K562 (cell line): ENCODE measurements at regions of chr2 and their contacts with region 1.

Region 1: DNA sequence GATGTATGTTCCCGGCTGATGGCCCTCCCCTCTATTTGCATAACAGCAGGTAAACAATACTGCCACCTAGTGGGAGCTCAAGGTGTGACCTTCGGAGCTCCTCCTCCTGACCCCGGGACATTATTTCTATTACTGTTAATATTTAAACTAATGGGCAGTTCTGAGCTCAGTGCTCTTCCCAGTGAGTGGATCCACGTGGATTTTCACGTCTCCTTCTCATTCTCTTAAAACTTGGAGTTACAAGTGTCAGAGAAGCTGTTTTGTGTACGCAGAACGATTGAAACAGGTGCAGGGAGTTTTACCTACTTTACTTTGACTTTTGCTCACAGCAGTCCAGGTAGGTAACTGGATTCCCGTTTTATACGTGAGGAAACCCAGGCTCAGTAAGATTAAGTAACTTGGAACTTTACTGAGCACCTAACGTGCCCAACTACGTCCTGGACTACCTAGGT is 127.3 kb downstream of the PRKCE start:
- DNase-seq: peak; percentile 77 to 87 (median 84)
- ATAC-seq: peak; percentile 98
- H3K4me3 ChIP-seq: no peak overlapping the region
- H3K27ac ChIP-seq: no peak overlapping the region
- H3K4me1 ChIP-seq: no peaks in the 10 kb centered on the region; a peak in 1 of 5 replicates
- H3K27me3 ChIP-seq: peaks cover 0 to 10% of the 10 kb centered on the region in 2 experiments; a peak in 3 of 5 replicates
- CTCF ChIP-seq: peak; percentile 75 to 88 (median 78)
- EP300 ChIP-seq: no peak
- POLR2A ChIP-seq: no peak
- RAD21 ChIP-seq: peak; percentile 68 to 74

Region 2: GRCh38 chr2:44981136-44982108 is 797.3 kb before region 1 on chr2:
- CTCF ChIA-PET with region 1: interaction called, 3 read pairs
- POLR2A ChIA-PET with region 1: no interaction called
- in situ Hi-C with region 1: no loop called
- intact Hi-C with region 1: loop called (anchors 5 kb)
- DNase-seq: peak; percentile 71 to 80 (median 74)
- ATAC-seq: peak; percentile 93
- H3K4me3 ChIP-seq: no peak overlapping the region
- H3K27ac ChIP-seq: no peak overlapping the region
- H3K4me1 ChIP-seq: no peaks in the 10 kb centered on the region
- H3K27me3 ChIP-seq: peaks cover 5% of the 10 kb centered on the region in 2 experiments; a peak in 3 of 5 replicates
- CTCF ChIP-seq: peak; percentile 75 to 86 (median 82)
- EP300 ChIP-seq: no peak
- POLR2A ChIP-seq: no peak
- RAD21 ChIP-seq: peak; percentile 84 to 92

Region 3: GRCh38 chr2:45649858-45650811 is 128.6 kb before region 1 on chr2:
- CTCF ChIA-PET with region 1: interaction called, 24 read pairs
- POLR2A ChIA-PET with region 1: interaction called, 5 read pairs
- in situ Hi-C with region 1: loop called (anchors 5 kb)
- intact Hi-C with region 1: no loop called
- DNase-seq: peak; percentile 46 to 59 (median 50)
- ATAC-seq: peak; percentile 63
- H3K4me3 ChIP-seq: peak overlapping the region; percentile 72
- H3K27ac ChIP-seq: peak overlapping the region; percentile 37; the same call in 1 of the 3 replicates
- H3K4me1 ChIP-seq: peaks cover 0 to 29% of the 10 kb centered on the region in 2 experiments; a peak in 4 of 5 replicates
- H3K27me3 ChIP-seq: peaks cover 31 to 55% of the 10 kb centered on the region in 2 experiments
- CTCF ChIP-seq: no peak
- EP300 ChIP-seq: no peak
- POLR2A ChIP-seq: no peak
- RAD21 ChIP-seq: no peak

Region 4: DNA sequence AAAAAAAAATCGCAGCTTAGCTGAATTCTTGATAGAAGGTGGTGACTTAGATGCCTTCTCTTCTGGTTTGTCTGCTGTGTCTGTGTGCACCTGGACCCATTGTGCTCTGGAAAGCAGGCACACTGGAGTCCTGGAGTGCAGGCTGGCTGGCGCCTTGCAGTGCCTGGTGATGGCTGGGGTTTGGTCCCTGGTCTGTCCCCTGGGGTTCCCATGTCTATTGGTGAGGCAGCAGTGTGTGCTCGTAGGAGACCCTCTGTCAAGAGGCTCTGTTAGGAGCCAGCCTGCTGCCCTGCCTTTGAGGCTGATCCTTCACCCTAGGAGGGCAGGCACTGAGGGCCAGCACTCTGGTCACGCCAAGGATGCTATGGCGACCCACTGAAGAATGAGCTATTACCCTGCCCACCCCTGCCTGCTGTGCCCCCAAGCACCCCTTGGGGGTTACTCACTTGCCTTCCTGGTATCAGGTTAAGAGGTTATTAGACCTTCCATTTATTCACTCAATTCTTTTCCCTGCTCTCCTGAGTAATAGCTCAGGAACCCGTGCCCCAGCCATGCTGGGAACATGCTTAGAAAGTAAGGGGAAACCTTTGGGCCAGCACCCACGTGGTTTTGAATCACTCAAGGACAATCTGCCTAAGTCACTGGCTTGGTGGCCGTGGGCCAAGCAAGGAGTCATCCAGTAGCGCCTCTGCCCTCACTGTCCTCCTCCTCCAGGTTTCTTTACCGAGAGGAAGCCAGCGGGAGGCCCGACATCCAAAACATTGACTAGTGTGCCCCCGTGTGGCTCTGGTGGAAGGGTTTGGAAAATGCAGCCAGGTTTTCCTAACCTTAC is 157.3 kb after region 1 on chr2:
- CTCF ChIA-PET with region 1: interaction called, 6 read pairs
- POLR2A ChIA-PET with region 1: no interaction called
- in situ Hi-C with region 1: no loop called
- intact Hi-C with region 1: loop called (anchors 2 kb)
- DNase-seq: peak; percentile 77 to 88 (median 80)
- ATAC-seq: peak; percentile 98
- H3K4me3 ChIP-seq: no peak overlapping the region
- H3K27ac ChIP-seq: no peak overlapping the region
- H3K4me1 ChIP-seq: 0 out of 5 replicates have a peak, but pooled peaks cover 4% of the 10 kb centered on the region in 2 experiments
- H3K27me3 ChIP-seq: peaks cover 2 to 33% of the 10 kb centered on the region in 2 experiments; a peak in 4 of 5 replicates
- CTCF ChIP-seq: peak; percentile 78 to 90 (median 81)
- EP300 ChIP-seq: peak; percentile 41; the same call in 1 of the 2 replicates
- POLR2A ChIP-seq: no peak
- RAD21 ChIP-seq: peak; percentile 92 to 96